Dendritic cell treated with granulocyte-macrophage colony-stimulating factor and Interleukin-4, amounts not matched to agents 40 ng/mL and 50 ng/mL, for 4 days (primary cell): ENCODE measurements at regions of chr9 and their contacts with region 1.

Region 1: GRCh38 chr9:5186416-5187169 is 1.2 kb upstream of the INSL6 start:
- H3K4me3 Mint-ChIP-seq: no peak overlapping the region
- H3K27ac Mint-ChIP-seq: no peak overlapping the region
- H3K4me1 Mint-ChIP-seq: no peaks in the 10 kb centered on the region
- H3K27me3 Mint-ChIP-seq: peaks cover 5% of the 10 kb centered on the region

Region 2: GRCh38 chr9:5425006-5425628 is 238.5 kb after region 1 on chr9:
- intact Hi-C with region 1: loop called (anchors 5 kb)
- H3K4me3 Mint-ChIP-seq: no peak overlapping the region
- H3K27ac Mint-ChIP-seq: no peak overlapping the region
- H3K4me1 Mint-ChIP-seq: peaks cover 23% of the 10 kb centered on the region
- H3K27me3 Mint-ChIP-seq: no peaks in the 10 kb centered on the region

Region 3: GRCh38 chr9:5442400-5443011 is 255.9 kb after region 1 on chr9:
- intact Hi-C with region 1: loop called (anchors 1 kb)
- H3K4me3 Mint-ChIP-seq: no peak overlapping the region
- H3K27ac Mint-ChIP-seq: peak overlapping the region; percentile 53
- H3K4me1 Mint-ChIP-seq: peaks cover 57% of the 10 kb centered on the region
- H3K27me3 Mint-ChIP-seq: no peaks in the 10 kb centered on the region